MCF 10A (cell line): ENCODE measurements at regions of chr12 and their contacts with region 1.

Region 1: GRCh38 chr12:10069099-10069498 is 29.7 kb downstream of the CLEC1A start:
- DNase-seq: peak; percentile 6
- H3K4me3 Mint-ChIP-seq: no peak overlapping the region
- H3K27ac Mint-ChIP-seq: no peak overlapping the region
- H3K4me1 Mint-ChIP-seq: peaks cover 6% of the 10 kb centered on the region
- H3K27me3 Mint-ChIP-seq: no peaks in the 10 kb centered on the region
- CTCF ChIP-seq: no peak

Region 2: DNA sequence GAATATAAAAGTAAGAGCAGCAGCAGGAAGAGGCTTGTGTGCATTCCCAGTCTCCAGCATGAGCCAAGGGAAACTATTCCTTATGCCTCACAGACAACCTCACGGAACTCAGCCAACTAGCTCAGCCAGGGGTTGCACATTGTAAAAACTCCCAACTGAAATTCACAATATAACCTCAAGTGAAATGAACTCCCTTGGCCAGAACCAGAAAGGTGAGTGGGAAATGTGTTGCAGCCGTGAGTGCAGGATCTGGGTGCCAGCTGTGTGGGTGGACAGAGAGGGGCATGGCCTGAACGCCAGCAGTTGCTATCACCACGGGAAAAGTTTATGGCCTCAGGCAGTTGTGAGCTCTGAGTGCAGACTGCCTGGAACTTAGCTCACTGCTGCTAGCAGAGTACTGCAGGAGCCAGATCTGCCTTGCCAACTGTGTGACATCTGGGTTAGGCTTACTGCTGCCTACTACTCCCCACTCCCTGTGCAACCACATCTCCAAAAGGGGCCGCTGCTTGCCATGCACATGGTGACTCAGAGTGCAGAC is 32.0 kb after region 1 on chr12:
- CTCF ChIA-PET with region 1: no interaction called
- POLR2A ChIA-PET with region 1: interaction called, 10 read pairs
- intact Hi-C with region 1: no loop called
- DNase-seq: peak; percentile 78
- H3K4me3 Mint-ChIP-seq: peak overlapping the region; percentile 38
- H3K27ac Mint-ChIP-seq: peak overlapping the region; percentile 25
- H3K4me1 Mint-ChIP-seq: peaks cover 20% of the 10 kb centered on the region
- H3K27me3 Mint-ChIP-seq: no peaks in the 10 kb centered on the region
- CTCF ChIP-seq: no peak